ENCODE measurements at regions of chr1 and their contacts with region 1.

Region 1: GRCh38 chr1:55071477-55071876 is 32.1 kb downstream of the PCSK9 start:
- DNase-seq: no peak
- H3K4me3 Mint-ChIP-seq: no peak overlapping the region
- H3K27ac Mint-ChIP-seq: peak overlapping the region; percentile 39
- H3K4me1 Mint-ChIP-seq: peaks cover 41% of the 10 kb centered on the region
- H3K27me3 Mint-ChIP-seq: no peaks in the 10 kb centered on the region

Region 2: DNA sequence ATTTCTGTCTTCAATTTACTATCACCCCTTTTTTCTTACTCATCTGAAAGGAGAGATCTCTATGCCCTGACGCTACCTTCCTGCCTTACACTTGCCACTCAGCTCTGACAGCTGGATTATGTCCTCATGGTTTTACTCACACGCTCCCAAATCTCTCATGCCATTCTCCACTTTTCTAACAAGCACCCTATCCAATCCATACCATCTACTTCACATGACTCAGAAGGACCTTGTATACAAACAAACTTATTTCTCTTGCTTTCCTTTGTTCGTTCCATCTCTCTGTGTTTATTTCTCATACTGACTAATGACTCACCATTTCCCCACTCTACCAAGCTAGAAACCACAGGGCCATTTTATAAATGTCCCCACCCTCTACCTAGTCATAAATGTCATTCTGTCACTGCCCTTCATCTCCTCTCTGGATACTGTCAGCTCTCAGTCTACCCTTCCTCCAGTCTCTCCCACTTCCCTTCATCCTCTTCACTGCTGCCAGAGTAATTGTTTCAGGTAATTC is 56.4 kb after region 1 on chr1:
- intact Hi-C with region 1: loop called (anchors 2 kb)
- DNase-seq: no peak
- H3K4me3 Mint-ChIP-seq: peak overlapping the region; percentile 11
- H3K27ac Mint-ChIP-seq: peak overlapping the region; percentile 83
- H3K4me1 Mint-ChIP-seq: peaks cover 32% of the 10 kb centered on the region
- H3K27me3 Mint-ChIP-seq: no peaks in the 10 kb centered on the region

Region 3: GRCh38 chr1:55215256-55216021 is 144.0 kb after region 1 on chr1 and contains the start of gene USP24:
- intact Hi-C with region 1: loop called (anchors 2 kb)
- DNase-seq: peak; percentile 81
- H3K4me3 Mint-ChIP-seq: peak within 1 kb of the TSS; percentile 92
- H3K27ac Mint-ChIP-seq: peak within 1 kb of the TSS; percentile 94
- H3K4me1 Mint-ChIP-seq: peaks cover 55% of the 10 kb centered on the region
- H3K27me3 Mint-ChIP-seq: no peaks in the 10 kb centered on the region
- total RNA-seq, gene USP24: 42.6 and 44.0 TPM in 2 replicates

Region 4: GRCh38 chr1:55277377-55278130 is 206.1 kb after region 1 on chr1:
- intact Hi-C with region 1: loop called (anchors 2 kb)
- DNase-seq: peak; percentile 68
- H3K4me3 Mint-ChIP-seq: no peak overlapping the region
- H3K27ac Mint-ChIP-seq: peak overlapping the region; percentile 56
- H3K4me1 Mint-ChIP-seq: peaks cover 33% of the 10 kb centered on the region
- H3K27me3 Mint-ChIP-seq: peaks cover 10% of the 10 kb centered on the region

Region 5: GRCh38 chr1:55337801-55338447 is 266.4 kb after region 1 on chr1:
- intact Hi-C with region 1: loop called (anchors 1 kb)
- DNase-seq: peak; percentile 9
- H3K4me3 Mint-ChIP-seq: no peak overlapping the region
- H3K27ac Mint-ChIP-seq: no peak overlapping the region
- H3K4me1 Mint-ChIP-seq: peaks cover 14% of the 10 kb centered on the region
- H3K27me3 Mint-ChIP-seq: peaks cover 7% of the 10 kb centered on the region

Measured in activated T-helper 2 cell treated with anti-CD3 and anti-CD28 coated beads, Interferon-gamma antibody, Interleukin-2, Interleukin-4, amounts not matched to agents 10 μg/mL and 5 μg/mL and 100 μg/mL, durations not matched to agents 14 hours and 24 hours and 36 hours (primary cell).